ENCODE measurements at regions of chr15 and their contacts with region 1.

Region 1: DNA sequence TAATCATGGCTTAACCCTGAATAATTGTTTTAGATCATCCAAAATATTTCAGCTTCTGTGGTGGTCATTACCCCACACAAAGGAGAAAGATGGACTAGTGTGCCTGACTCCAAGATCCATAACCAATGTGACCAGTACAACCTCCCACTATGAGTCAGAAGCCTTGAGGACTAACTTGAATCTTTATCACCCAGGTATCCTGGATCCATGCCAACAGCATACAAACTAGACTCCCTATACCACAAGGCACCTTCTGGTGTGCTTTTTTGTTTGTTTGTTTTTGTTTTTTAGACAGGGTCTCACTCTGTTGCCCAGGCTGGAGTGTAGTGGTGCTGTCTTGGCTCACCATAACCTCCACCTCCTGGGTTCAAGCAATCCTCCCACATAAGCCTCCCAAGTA is 317.7 kb downstream of the VPS13C start:
- DNase-seq: peak; percentile 38
- H3K27ac ChIP-seq: no peak overlapping the region
- CTCF ChIP-seq: no peak

Region 2: DNA sequence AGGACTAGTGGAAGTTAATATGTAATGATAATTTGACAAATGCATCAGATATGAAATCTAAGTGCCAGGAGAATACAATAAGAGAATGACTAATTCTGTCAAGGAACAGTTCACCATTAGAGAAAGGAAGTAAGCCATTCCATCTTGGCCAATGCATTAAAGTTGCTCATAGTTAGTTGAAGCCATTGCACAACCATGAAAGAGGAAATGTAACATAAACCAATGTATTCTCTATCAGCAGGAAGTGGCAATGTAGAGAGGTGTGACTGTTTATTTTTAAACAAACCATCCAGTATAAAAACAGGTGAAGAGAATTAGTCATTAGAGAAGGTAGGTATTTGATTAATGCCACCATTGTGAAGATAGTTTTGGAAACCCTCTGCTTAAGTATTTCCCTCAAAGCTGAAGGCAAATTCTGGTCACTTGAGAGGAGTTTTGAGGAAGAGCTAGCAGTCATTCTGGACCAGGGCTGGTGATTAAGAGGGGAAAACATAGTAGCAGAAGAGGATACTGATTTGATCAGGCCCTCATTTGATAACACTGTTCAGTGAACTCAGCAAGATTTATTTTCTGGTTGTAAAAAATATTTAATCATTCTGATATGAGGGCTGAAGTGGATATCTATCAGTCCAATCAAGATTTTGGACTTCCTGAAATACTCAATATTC is 1334.0 kb before region 1 on chr15:
- CTCF ChIA-PET with region 1: no interaction called
- POLR2A ChIA-PET with region 1: interaction called, 10 read pairs
- DNase-seq: peak; percentile 86
- H3K27ac ChIP-seq: no peak overlapping the region; the same call in 1 of the 2 replicates
- CTCF ChIP-seq: no peak

Region 3: DNA sequence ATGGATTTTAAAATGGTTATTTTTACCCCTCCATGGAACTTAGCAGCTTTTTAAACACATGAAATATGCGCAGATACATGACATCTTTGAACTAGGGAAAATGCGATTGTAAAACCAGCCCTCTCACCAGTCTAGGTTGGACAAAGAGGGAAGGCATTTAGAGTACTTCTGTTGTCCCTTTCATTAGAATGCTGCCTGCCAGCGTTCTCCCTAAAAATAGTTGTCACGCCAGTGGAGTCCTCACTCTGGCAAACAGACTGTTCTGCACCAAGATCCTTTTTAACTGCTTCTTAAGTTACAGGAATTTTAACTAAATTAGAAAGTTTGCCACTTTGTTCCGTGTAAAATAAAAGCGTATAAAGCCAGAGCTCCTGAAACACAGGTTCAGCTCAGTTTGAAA is 22.4 kb after region 1 on chr15:
- CTCF ChIA-PET with region 1: no interaction called
- POLR2A ChIA-PET with region 1: no interaction called
- DNase-seq: no peak
- H3K27ac ChIP-seq: no peak overlapping the region
- CTCF ChIP-seq: no peak

Measured in RWPE1 (cell line).